ENCODE measurements at regions of chrX and their contacts with region 1.

Region 1: GRCh38 chrX:45806410-45807121 is 605.9 kb upstream of the DIPK2B start:
- DNase-seq: peak; percentile 3 to 80 (median 58)
- ATAC-seq: peak; percentile 88 to 95
- H3K4me3 Mint-ChIP-seq: peak overlapping the region; percentile 71 to 87 (median 78)
- H3K27ac Mint-ChIP-seq: peak overlapping the region; percentile 89 to 98 (median 96)
- H3K4me1 Mint-ChIP-seq: peaks cover 5 to 45% (median 27%) of the 10 kb centered on the region in 4 donors
- H3K27me3 Mint-ChIP-seq: no peaks in the 10 kb centered on the region

Region 2: GRCh38 chrX:45769761-45770582 is 36.6 kb before region 1 on chrX:
- POLR2A ChIA-PET with region 1: interaction called, 20 read pairs
- DNase-seq: peak in 1 of 10 donors; percentile 8
- ATAC-seq: peak; percentile 22 to 32
- H3K4me3 Mint-ChIP-seq: peak overlapping the region; percentile 77 to 95 (median 86)
- H3K27ac Mint-ChIP-seq: peak overlapping the region; percentile 61 to 97 (median 94)
- H3K4me1 Mint-ChIP-seq: peaks cover 15 to 57% (median 35%) of the 10 kb centered on the region in 4 donors
- H3K27me3 Mint-ChIP-seq: no peaks in the 10 kb centered on the region

Region 3: DNA sequence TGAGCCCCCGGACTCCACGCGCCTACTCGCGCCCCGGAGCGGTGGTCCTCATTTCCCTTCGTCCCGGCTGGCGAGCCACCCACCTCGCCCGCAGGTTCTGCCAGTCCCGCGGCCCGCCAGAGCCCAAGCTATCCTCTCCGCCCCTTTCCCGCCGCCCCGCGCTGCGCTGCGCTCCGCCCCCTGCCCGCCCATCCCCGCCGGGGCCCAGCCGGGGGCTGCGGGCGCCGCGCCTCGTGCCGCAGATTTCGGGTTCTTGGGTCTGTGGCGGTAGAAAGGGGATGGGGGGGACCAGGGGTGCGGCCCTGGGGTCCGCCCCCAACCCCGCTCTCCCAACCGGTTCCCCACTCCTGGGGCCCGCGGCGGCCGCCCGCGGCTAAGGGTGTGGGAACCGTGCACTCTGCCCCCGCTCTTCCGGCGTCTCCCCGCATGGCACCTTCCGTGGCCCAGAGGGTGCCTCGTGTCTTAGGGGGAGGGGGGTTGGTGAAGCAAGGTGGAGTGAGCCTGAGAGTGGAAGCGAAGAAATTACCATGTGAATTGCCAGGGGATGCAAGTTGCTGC is 44.9 kb after region 1 on chrX:
- POLR2A ChIA-PET with region 1: interaction called, 10 read pairs
- DNase-seq: peak in 9 of 10 donors; percentile 2 to 67 (median 25)
- ATAC-seq: peak; percentile 74 to 75
- H3K4me3 Mint-ChIP-seq: peak overlapping the region; percentile 73 to 89 (median 84)
- H3K27ac Mint-ChIP-seq: peak overlapping the region in 3 of 10 donors; percentile 2 to 49 (median 39)
- H3K4me1 Mint-ChIP-seq: peaks cover 6 to 16% (median 8%) of the 10 kb centered on the region in 4 donors
- H3K27me3 Mint-ChIP-seq: peaks cover 0 to 3% (median 0%) of the 10 kb centered on the region in 5 donors

Measured in naive thymus-derived CD8-positive, alpha-beta T cell (primary cell).